ENCODE measurements at regions of chr9 and their contacts with region 1.

Region 1: GRCh38 chr9:130107234-130107861 is 53.6 kb downstream of the GPR107 start:
- DNase-seq: peak; percentile 13
- H3K4me3 ChIP-seq: no peak overlapping the region
- H3K27ac ChIP-seq: peak overlapping the region in 3 of 4 donors; percentile 55 to 75 (median 73)
- H3K4me1 ChIP-seq: peaks cover 0 to 20% (median 0%) of the 10 kb centered on the region in 3 donors
- H3K27me3 ChIP-seq: no peaks in the 10 kb centered on the region
- CTCF ChIP-seq: peak; percentile 70 to 85 (median 80)
- POLR2A ChIP-seq: no peak

Region 2: DNA sequence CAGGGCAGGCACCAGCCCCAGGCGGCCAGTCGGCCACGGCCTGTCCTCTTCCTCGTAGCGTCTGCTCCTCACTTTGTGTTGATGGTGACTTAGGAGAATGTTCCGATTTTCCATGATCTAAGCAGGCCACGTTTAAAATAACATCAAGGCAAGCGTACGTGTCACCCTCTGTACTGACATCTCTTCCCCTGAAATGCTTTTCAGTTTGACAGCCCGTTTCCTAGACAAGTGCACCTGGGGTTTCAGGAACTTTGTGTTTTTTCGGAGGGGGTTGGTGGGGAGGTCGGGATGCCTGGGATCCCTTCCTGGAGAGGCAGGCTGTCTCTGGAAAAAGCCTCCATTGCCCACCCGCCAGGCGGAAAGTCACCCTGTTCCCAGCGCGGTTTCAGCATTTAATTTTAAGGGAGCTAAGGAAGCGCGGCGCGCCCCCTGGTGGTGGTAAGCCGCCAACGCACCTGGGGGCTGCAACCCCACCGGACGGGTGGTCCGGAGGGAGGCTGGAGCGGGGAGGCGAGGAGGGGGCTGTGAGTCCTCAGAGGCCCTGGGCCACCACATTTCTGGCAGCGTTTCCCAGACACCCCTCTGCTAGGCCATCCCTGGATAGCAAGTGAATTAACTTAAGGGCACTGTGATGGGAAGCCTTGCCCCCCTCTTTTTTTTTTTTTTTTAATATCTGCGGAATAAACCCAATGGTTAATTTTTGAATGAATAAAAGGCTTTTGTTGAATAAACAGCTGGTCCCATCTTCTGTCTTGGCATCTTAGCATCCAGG is 128.7 kb after region 1 on chr9:
- intact Hi-C with region 1: loop called (anchors 2 kb)
- DNase-seq: no peak
- H3K4me3 ChIP-seq: no peak overlapping the region
- H3K27ac ChIP-seq: peak overlapping the region; percentile 50 to 79 (median 65)
- H3K4me1 ChIP-seq: peaks cover 9 to 46% (median 25%) of the 10 kb centered on the region in 3 donors
- H3K27me3 ChIP-seq: no peaks in the 10 kb centered on the region
- CTCF ChIP-seq: peak; percentile 98 to 100 (median 99)
- POLR2A ChIP-seq: no peak

Region 3: GRCh38 chr9:130343445-130343918 is 236.1 kb after region 1 on chr9:
- intact Hi-C with region 1: loop called (anchors 10 kb)
- DNase-seq: no peak
- H3K4me3 ChIP-seq: no peak overlapping the region
- H3K27ac ChIP-seq: peak overlapping the region in 1 of 4 donors; percentile 18
- H3K4me1 ChIP-seq: peaks cover 0 to 11% (median 0%) of the 10 kb centered on the region in 3 donors
- H3K27me3 ChIP-seq: peaks cover 0 to 15% (median 0%) of the 10 kb centered on the region in 4 donors
- CTCF ChIP-seq: peak; percentile 41 to 77 (median 58)
- POLR2A ChIP-seq: no peak